HEK293T (cell line): ENCODE measurements at regions of chr2 and their contacts with region 1.

Region 1: DNA sequence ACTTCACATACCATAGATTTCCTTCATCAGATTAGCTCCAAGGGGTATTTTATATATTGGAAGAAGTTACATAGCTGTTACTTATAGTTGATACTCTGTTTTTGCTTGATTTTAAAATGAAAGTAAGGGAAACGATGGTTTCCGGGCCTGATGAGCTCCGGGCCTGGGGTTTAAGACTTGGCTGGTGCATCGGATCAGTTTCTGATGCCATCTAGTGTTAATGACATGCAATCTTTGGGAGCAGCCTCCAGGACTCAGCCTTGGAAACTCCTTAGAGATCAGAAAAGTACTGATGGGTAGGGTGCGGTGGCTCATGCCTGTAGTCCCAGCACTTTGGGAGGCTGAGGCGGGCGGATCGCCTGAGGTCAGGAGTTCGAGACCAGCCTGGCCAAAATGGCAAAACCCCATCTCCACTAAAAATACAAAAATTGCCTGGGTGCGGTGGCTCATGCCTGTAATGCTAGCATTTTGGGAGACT is 47.1 kb upstream of the CNOT11 start:
- DNase-seq: peak; percentile 77

Region 2: GRCh38 chr2:101036562-101037457 is 168.8 kb before region 1 on chr2:
- CTCF ChIA-PET with region 1: interaction called, 21 read pairs
- POLR2A ChIA-PET with region 1: no interaction called
- DNase-seq: no peak

Region 3: DNA sequence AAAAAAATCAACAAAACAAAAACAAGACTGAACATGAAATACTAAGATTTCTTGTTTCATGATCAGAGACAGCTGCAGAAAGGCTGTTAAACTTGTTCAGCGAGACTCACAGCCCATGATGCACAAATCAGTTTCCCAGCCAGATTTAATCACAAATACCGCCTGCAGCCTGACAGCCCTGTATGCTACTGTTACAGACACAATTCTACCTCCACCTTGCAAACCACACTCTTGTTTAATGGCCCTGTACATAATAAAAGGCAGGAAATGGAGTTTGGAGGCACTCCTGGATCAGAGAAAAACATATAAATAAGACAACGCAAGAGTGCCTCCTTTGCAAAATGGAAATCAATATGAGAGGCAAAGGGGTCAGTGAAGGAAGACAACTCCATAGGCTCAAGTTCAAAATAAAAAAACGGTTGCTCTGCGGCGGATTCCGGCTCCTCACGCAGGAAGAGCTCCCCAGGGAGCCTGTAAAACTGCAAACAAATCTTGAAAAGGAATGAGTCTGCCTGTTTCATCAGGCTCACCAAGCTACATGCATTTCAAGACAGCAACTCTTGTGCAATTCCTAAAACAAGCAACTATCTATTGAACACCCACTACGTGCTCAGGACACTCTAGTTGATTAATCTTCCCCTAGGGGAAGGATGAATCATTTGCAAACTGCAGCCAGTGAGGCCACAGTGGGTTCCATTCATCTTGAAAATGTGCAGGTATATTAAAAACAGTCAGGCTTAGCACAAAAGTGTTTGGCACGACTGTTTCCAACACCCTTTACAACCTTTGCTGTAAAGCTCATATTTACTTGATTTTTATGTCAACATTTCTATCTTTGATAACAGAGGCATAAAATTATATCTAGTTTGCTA is 91.9 kb before region 1 on chr2:
- CTCF ChIA-PET with region 1: interaction called, 11 read pairs
- POLR2A ChIA-PET with region 1: no interaction called
- DNase-seq: peak; percentile 62

Region 4: DNA sequence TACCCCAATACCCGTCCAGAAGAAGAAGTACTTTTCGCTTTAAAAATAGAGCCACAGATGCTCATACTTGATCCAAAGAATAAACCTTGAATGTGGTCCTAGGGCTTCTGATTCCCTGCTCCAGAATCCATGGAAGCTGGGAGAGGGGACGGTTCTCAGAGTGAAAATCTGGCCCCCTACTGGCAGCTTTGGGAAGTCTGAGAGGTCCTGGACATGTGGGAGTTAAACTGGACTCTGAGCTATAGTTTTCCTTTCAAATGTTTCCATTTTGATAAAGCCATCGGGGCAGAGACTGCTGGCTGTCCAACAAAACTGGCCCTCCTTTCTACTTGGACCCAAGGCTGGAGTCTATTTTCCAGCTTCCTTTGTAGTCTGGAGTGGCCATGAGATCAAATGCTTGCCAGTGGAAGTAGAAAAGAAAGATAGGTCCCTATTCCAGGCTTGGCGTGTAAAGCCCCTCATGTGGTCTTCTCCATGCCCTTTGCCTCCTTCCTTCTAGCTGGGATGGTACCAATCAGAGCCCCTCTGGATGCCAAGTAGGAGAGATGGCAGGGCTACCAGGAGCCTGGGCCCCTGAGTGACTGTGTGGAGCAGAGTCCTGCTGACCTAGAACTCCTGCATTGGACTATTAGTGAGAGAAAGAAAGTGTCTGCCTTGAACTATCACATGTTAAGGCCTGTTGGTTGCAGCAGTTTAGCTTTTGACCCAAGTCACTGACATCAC is 16.7 kb before region 1 on chr2:
- CTCF ChIA-PET with region 1: interaction called, 21 read pairs
- POLR2A ChIA-PET with region 1: interaction called, 3 read pairs
- DNase-seq: peak; percentile 69